WTC11 (cell line): ENCODE measurements at regions of chr10 and their contacts with region 1.

Region 1: GRCh38 chr10:122279725-122280141 is 8.6 kb downstream of the BTBD16 start:
- DNase-seq: peak; percentile 79
- ATAC-seq: peak; percentile 80
- H3K4me3 Mint-ChIP-seq: no peak overlapping the region
- H3K27ac Mint-ChIP-seq: no peak overlapping the region
- H3K4me1 Mint-ChIP-seq: peaks cover 8% of the 10 kb centered on the region
- H3K27me3 Mint-ChIP-seq: no peaks in the 10 kb centered on the region
- CTCF ChIP-seq: peak; percentile 65

Region 2: GRCh38 chr10:122267849-122268737 is 11.6 kb before region 1 on chr10:
- CTCF ChIA-PET with region 1: interaction called, 15 read pairs
- POLR2A ChIA-PET with region 1: no interaction called
- DNase-seq: peak; percentile 80
- ATAC-seq: peak; percentile 96
- H3K4me3 Mint-ChIP-seq: no peak overlapping the region
- H3K27ac Mint-ChIP-seq: no peak overlapping the region
- H3K4me1 Mint-ChIP-seq: peaks cover 5% of the 10 kb centered on the region
- H3K27me3 Mint-ChIP-seq: no peaks in the 10 kb centered on the region; the same call in 1 of the 2 replicates
- CTCF ChIP-seq: peak; percentile 87

Region 3: GRCh38 chr10:122310311-122311050 is 30.7 kb after region 1 on chr10:
- CTCF ChIA-PET with region 1: interaction called, 10 read pairs
- POLR2A ChIA-PET with region 1: no interaction called
- DNase-seq: no peak
- ATAC-seq: peak; percentile 46
- H3K4me3 Mint-ChIP-seq: no peak overlapping the region
- H3K27ac Mint-ChIP-seq: no peak overlapping the region
- H3K4me1 Mint-ChIP-seq: peaks cover 18% of the 10 kb centered on the region
- H3K27me3 Mint-ChIP-seq: no peaks in the 10 kb centered on the region; the same call in 1 of the 2 replicates
- CTCF ChIP-seq: no peak

Region 4: GRCh38 chr10:122435212-122435827 is 155.6 kb after region 1 on chr10:
- CTCF ChIA-PET with region 1: interaction called, 36 read pairs
- POLR2A ChIA-PET with region 1: no interaction called
- DNase-seq: no peak
- ATAC-seq: no peak
- H3K4me3 Mint-ChIP-seq: no peak overlapping the region
- H3K27ac Mint-ChIP-seq: no peak overlapping the region
- H3K4me1 Mint-ChIP-seq: no peaks in the 10 kb centered on the region
- H3K27me3 Mint-ChIP-seq: no peaks in the 10 kb centered on the region
- CTCF ChIP-seq: peak; percentile 64

Region 5: GRCh38 chr10:122565728-122566206 is 286.0 kb after region 1 on chr10:
- CTCF ChIA-PET with region 1: interaction called, 26 read pairs
- POLR2A ChIA-PET with region 1: no interaction called
- DNase-seq: peak; percentile 82
- ATAC-seq: peak; percentile 71
- H3K4me3 Mint-ChIP-seq: no peak overlapping the region
- H3K27ac Mint-ChIP-seq: no peak overlapping the region
- H3K4me1 Mint-ChIP-seq: peaks cover 9% of the 10 kb centered on the region
- H3K27me3 Mint-ChIP-seq: peaks cover 5% of the 10 kb centered on the region; the same call in 1 of the 2 replicates
- CTCF ChIP-seq: peak; percentile 75